A673 (cell line): ENCODE measurements at regions of chr15 and their contacts with region 1.

Region 1: GRCh38 chr15:90716976-90717821 is at the start of gene BLM:
- DNase-seq: peak; percentile 98
- H3K4me3 ChIP-seq: peak within 1 kb of the TSS; percentile 87
- H3K27ac ChIP-seq: peak within 1 kb of the TSS; percentile 93
- H3K4me1 ChIP-seq: peaks cover 8% of the 10 kb centered on the region
- H3K27me3 ChIP-seq: no peaks in the 10 kb centered on the region
- CTCF ChIP-seq: peak; percentile 45; the same call in 1 of the 2 replicates
- total RNA-seq, gene BLM: 40.0 and 43.6 TPM in 2 replicates

Region 2: DNA sequence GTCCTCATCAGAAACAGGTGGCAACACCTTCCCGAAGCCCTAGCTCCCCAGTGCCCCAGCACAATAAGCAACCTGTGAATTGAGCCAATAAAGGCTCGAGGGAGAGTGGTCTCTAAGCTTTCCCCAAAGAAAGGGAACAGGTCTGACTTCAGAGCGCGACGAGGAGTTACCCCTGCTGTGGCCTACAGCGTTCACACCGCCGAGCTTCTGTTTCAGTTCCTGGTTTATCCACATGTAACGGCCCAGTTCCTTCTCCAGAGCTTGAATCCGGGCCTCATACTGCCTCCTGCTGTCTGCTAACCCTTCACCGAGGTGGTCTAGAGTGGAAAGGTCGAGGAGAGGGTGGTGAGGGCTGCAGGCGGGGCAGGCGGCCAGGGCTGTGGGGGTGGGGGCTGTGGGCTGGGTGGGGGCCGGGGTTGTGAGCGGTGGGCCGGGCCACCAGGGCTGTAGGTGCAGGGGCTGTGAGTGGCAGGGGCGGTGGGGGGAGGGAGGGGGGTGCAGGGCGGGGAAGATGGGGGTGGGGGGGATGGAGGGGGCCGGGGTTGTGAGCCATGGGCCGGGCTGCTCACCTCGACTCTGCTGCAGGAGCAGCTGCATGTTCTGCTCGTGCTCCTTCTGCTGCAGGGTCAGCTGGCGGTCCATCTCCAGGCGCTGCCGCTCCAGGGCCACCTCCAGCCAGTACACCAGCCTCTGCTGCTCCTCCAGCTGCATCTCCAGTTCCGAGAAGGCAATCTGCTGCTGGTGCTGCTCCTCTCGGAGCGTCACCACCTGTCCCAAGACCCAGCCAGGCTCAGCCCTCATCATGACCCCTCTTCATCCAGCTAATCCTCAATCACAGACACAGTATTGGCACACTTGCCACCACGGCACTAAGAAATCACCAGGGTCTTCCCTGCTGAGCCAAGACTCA is 1088.1 kb before region 1 on chr15:
- CTCF ChIA-PET with region 1: no interaction called
- POLR2A ChIA-PET with region 1: no interaction called
- intact Hi-C with region 1: no loop called
- DNase-seq: no peak
- H3K4me3 ChIP-seq: no peak overlapping the region
- H3K27ac ChIP-seq: no peak overlapping the region
- H3K4me1 ChIP-seq: no peaks in the 10 kb centered on the region
- H3K27me3 ChIP-seq: no peaks in the 10 kb centered on the region
- CTCF ChIP-seq: no peak

Region 3: GRCh38 chr15:90648137-90649070 is 68.8 kb before region 1 on chr15:
- CTCF ChIA-PET with region 1: interaction called, 15 read pairs
- POLR2A ChIA-PET with region 1: no interaction called
- intact Hi-C with region 1: loop called (anchors 2 kb)
- DNase-seq: peak; percentile 84
- H3K4me3 ChIP-seq: no peak overlapping the region
- H3K27ac ChIP-seq: peak overlapping the region; percentile 80
- H3K4me1 ChIP-seq: peaks cover 29% of the 10 kb centered on the region
- H3K27me3 ChIP-seq: no peaks in the 10 kb centered on the region
- CTCF ChIP-seq: peak; percentile 91

Region 4: DNA sequence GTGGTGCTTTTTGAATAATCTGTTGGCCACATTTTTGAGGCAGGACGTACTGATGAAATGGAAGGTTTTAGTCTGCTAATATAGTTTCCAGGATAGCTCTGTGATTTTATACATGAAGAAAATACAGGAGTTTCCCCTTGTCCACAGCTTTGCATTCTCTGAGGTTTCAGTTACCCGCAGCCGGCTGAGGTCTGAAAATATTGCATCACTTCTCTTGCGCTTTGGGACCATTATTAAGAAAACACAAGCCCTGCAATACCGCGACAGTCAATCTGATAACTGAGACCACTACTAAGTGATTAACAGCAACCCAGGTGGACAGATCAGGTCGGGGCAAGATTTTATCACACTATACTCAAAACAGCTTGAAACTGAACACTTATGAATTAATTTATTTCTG is 33.0 kb after region 1 on chr15:
- CTCF ChIA-PET with region 1: no interaction called
- POLR2A ChIA-PET with region 1: interaction called, 13 read pairs
- intact Hi-C with region 1: no loop called
- DNase-seq: no peak
- H3K4me3 ChIP-seq: no peak overlapping the region
- H3K27ac ChIP-seq: no peak overlapping the region
- H3K4me1 ChIP-seq: peaks cover 5% of the 10 kb centered on the region
- H3K27me3 ChIP-seq: no peaks in the 10 kb centered on the region
- CTCF ChIP-seq: no peak